Ovary (tissue), 10 donors: ENCODE measurements at regions of chr5 and their contacts with region 1.

Region 1: GRCh38 chr5:142167458-142167857 is 58.9 kb downstream of the NDFIP1 start:
- DNase-seq: no peak
- H3K4me3 ChIP-seq: no peak overlapping the region
- H3K27ac ChIP-seq: no peak overlapping the region
- H3K4me1 ChIP-seq: no peaks in the 10 kb centered on the region
- H3K27me3 ChIP-seq: no peaks in the 10 kb centered on the region
- CTCF ChIP-seq: no peak
- EP300 ChIP-seq: no peak
- POLR2A ChIP-seq: no peak

Region 2: DNA sequence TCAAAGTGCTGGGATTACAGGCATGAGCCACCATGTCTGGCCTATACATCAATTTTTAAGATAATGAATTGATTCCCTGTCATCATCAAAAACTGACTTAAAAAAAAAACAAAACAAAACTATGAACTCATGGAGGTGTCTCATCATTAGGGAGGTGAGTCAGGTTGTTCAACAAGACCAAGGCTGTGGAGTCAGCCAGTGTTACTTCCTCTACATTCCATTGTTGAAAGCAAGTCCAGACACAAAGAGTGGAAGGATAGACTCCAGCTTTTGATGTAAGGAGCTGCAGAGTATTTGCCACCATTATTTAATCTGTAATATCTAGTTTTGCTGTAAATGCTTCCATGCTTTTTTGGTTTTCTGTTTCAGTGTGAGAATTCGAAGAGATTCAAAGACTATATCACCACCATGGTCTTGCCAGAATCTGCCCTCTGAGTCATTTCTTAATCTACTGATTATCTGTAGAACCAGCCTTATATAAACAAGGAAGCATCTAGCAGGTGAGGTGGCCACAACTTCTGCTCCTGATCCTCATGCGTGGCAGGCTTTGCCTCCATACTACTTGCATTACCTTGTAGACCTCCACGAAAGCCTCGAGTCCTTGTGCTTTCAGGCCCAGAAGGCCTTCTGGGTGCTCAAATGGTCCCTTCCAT is 362.3 kb after region 1 on chr5:
- intact Hi-C with region 1: loop called in 1 of 4 experiments (anchors 5 kb)
- DNase-seq: no peak
- H3K4me3 ChIP-seq: no peak overlapping the region
- H3K27ac ChIP-seq: no peak overlapping the region
- H3K4me1 ChIP-seq: no peaks in the 10 kb centered on the region
- H3K27me3 ChIP-seq: no peaks in the 10 kb centered on the region
- CTCF ChIP-seq: no peak
- EP300 ChIP-seq: no peak
- POLR2A ChIP-seq: no peak

Region 3: GRCh38 chr5:142769741-142770631 is 602.5 kb after region 1 on chr5 and contains the start of gene ARHGAP26:
- intact Hi-C with region 1: no loop called
- DNase-seq: peak; percentile 94 to 97 (median 95)
- H3K4me3 ChIP-seq: peak within 1 kb of the TSS; percentile 85
- H3K27ac ChIP-seq: peak within 1 kb of the TSS; percentile 26 to 75
- H3K4me1 ChIP-seq: no peaks in the 10 kb centered on the region
- H3K27me3 ChIP-seq: no peaks in the 10 kb centered on the region
- CTCF ChIP-seq: peak in 2 of 3 donors; percentile 22 to 35
- EP300 ChIP-seq: no peak
- POLR2A ChIP-seq: peak; percentile 99
- total RNA-seq, gene ARHGAP26: 7.1 to 47.1 (median 16.2) TPM